ENCODE measurements at regions of chr2 and their contacts with region 1.

Region 1: GRCh38 chr2:27683390-27684071 is 19.8 kb downstream of the SLC4A1AP start:
- H3K4me3 ChIP-seq: no peak overlapping the region
- H3K27ac ChIP-seq: no peak overlapping the region
- H3K4me1 ChIP-seq: no peaks in the 10 kb centered on the region
- CTCF ChIP-seq: peak; percentile 95

Region 2: GRCh38 chr2:26745609-26746327 is 937.8 kb before region 1 on chr2:
- CTCF ChIA-PET with region 1: no interaction called
- POLR2A ChIA-PET with region 1: no interaction called
- H3K4me3 ChIP-seq: no peak overlapping the region
- H3K27ac ChIP-seq: no peak overlapping the region
- H3K4me1 ChIP-seq: no peaks in the 10 kb centered on the region
- CTCF ChIP-seq: peak; percentile 82

Region 3: DNA sequence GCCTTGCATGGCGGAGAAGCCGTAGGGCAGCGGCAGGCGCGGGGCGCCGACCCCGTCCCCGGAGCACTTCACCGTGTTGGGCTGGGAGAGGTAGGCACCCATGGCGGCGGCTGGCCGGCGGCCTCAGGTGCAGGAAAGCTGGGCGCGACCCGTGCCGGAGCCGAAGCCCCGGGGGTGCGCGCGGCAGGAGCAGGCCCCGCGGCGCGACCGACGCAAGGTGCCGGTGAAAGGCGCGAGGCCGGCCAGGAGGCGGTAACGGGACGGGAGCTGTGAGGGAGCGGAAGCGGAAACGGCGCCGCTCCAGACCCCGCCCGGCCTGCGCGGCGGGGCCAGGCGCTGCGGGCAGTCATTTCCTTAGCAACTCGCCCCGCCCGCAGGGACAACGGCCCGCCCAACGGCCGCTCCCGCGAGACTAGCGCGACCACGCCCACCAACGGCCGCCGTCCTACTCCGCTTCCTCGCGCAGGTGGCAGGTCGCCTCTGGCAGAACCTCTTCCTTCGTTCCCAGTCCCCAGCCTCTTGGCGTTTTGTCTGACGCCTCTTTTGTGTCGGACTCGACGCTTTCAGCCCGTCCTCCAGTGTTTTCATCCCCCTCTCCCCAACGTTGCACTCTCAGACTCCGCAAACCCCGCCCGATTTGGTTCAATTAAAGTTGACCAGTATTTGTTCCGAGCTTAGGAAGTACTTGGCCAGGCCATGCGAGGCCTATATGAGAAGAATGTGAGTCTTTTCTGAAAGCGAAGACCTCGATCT is 274.0 kb before region 1 on chr2 and contains the start of gene PPM1G:
- CTCF ChIA-PET with region 1: interaction called, 17 read pairs
- POLR2A ChIA-PET with region 1: no interaction called
- H3K4me3 ChIP-seq: peak within 1 kb of the TSS; percentile 98
- H3K27ac ChIP-seq: peak within 1 kb of the TSS; percentile 96
- H3K4me1 ChIP-seq: peaks cover 9% of the 10 kb centered on the region; the same call in 1 of the 2 replicates
- CTCF ChIP-seq: peak; percentile 4

Region 4: GRCh38 chr2:27647289-27647688 is 36.2 kb before region 1 on chr2:
- CTCF ChIA-PET with region 1: interaction called, 16 read pairs
- POLR2A ChIA-PET with region 1: no interaction called
- H3K4me3 ChIP-seq: no peak overlapping the region
- H3K27ac ChIP-seq: no peak overlapping the region
- H3K4me1 ChIP-seq: no peaks in the 10 kb centered on the region
- CTCF ChIP-seq: no peak

Region 5: GRCh38 chr2:27672723-27673486 is 10.6 kb before region 1 on chr2:
- CTCF ChIA-PET with region 1: interaction called, 61 read pairs
- POLR2A ChIA-PET with region 1: interaction called, 3 read pairs
- H3K4me3 ChIP-seq: no peak overlapping the region
- H3K27ac ChIP-seq: no peak overlapping the region
- H3K4me1 ChIP-seq: no peaks in the 10 kb centered on the region
- CTCF ChIP-seq: no peak

Region 6: GRCh38 chr2:27703638-27704341 is 20.3 kb after region 1 on chr2:
- CTCF ChIA-PET with region 1: interaction called, 66 read pairs
- POLR2A ChIA-PET with region 1: no interaction called
- H3K4me3 ChIP-seq: no peak overlapping the region
- H3K27ac ChIP-seq: no peak overlapping the region
- H3K4me1 ChIP-seq: peaks cover 6% of the 10 kb centered on the region
- CTCF ChIP-seq: peak; percentile 72

Region 7: GRCh38 chr2:27723372-27724144 is 40.0 kb after region 1 on chr2:
- CTCF ChIA-PET with region 1: interaction called, 14 read pairs
- POLR2A ChIA-PET with region 1: no interaction called
- H3K4me3 ChIP-seq: no peak overlapping the region
- H3K27ac ChIP-seq: no peak overlapping the region
- H3K4me1 ChIP-seq: no peaks in the 10 kb centered on the region
- CTCF ChIP-seq: 0 out of 2 replicates have a peak, but pooled peaks have one; percentile 25